H1 (cell line): ENCODE measurements at regions of chr3 and their contacts with region 1.

Region 1: DNA sequence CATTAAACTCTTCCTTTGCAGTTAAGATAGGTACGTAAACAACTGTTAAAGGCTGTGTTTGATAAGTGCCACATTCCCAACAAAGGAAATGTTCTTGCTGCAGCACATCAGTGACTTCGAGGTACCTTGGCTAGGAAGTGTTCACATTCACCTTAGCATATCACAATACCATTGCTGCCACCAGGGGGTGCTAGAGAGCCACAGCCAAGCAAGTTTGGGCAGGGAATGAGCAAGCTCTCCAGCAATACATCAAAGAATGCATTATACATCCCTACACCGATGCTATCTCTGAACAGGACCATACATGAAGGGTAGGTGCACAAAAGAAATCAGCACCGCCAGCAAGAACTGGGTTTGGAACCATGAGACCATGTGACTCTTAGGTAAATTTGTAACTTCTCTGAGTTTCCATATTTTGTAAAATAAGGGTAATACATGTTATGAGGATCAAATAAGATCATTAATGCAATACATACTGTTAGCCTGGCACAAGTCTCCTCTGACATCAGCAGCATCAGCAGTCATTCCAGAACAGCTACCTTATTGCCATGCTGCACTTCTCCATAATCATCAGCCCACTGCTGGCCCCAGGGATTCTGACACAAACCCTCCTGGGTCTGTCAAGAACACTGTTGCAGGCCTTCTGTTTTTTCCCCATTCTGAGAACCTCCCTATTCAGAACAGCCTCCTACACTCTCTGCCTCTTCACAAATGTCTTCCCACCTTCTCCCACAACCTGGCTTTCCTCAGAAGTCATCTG is 37.6 kb downstream of the RYK start:
- DNase-seq: peak; percentile 73 to 99
- H3K4me3 ChIP-seq: no peak overlapping the region
- H3K27ac ChIP-seq: no peak overlapping the region
- H3K4me1 ChIP-seq: no peaks in the 10 kb centered on the region
- H3K27me3 ChIP-seq: no peaks in the 10 kb centered on the region
- CTCF ChIP-seq: peak; percentile 82 to 99 (median 90)
- EP300 ChIP-seq: no peak
- POLR2A ChIP-seq: no peak
- RAD21 ChIP-seq: peak; percentile 82 to 89

Region 2: GRCh38 chr3:133871368-133872090 is 341.6 kb before region 1 on chr3:
- CTCF ChIA-PET with region 1: no interaction called
- POLR2A ChIA-PET with region 1: no interaction called
- DNase-seq: no peak
- H3K4me3 ChIP-seq: no peak overlapping the region
- H3K27ac ChIP-seq: no peak overlapping the region
- H3K4me1 ChIP-seq: peaks cover 0 to 3% (median 0%) of the 10 kb centered on the region in 4 experiments; a peak in 3 of 7 replicates
- H3K27me3 ChIP-seq: no peaks in the 10 kb centered on the region
- CTCF ChIP-seq: no peak
- EP300 ChIP-seq: no peak
- POLR2A ChIP-seq: no peak
- RAD21 ChIP-seq: no peak

Region 3: GRCh38 chr3:134145177-134145576 is 67.9 kb before region 1 on chr3:
- CTCF ChIA-PET with region 1: interaction called, 14 read pairs
- POLR2A ChIA-PET with region 1: no interaction called
- DNase-seq: no peak
- H3K4me3 ChIP-seq: no peak overlapping the region
- H3K27ac ChIP-seq: no peak overlapping the region
- H3K4me1 ChIP-seq: no peaks in the 10 kb centered on the region
- H3K27me3 ChIP-seq: no peaks in the 10 kb centered on the region
- CTCF ChIP-seq: peak; percentile 33 to 42 (median 41); a peak in 3 of 4 replicates
- EP300 ChIP-seq: no peak
- POLR2A ChIP-seq: no peak
- RAD21 ChIP-seq: peak in 1 of 2 experiments; percentile 40; a peak in 1 of 4 replicates

Region 4: DNA sequence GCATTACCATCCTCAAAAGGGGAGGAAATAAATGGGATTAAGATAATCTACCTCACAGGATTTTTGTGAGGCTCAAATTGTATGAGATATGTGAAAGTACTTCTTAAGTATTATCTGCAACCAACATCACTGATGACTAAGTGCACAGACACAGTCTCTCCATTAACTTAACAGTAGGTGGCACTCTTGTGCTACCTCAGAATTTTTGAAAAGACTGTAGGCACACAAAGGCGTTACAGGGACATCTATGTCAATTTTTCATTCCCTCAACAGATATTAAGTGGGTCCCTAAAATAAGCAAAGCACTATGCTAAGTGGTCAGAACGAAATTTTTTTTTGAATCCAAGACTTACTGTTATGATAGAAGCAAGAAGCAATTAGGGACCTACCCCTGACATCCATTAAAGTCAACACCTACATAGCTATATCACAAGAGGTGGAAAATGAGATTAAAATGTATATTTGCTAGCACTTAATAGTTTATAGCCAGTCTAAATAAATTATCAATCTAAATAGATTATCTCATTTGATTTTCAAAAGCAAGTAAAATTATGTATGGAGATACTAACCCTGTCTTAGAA is 15.3 kb before region 1 on chr3:
- CTCF ChIA-PET with region 1: interaction called, 140 read pairs
- POLR2A ChIA-PET with region 1: interaction called, 4 read pairs
- DNase-seq: no peak
- H3K4me3 ChIP-seq: no peak overlapping the region
- H3K27ac ChIP-seq: no peak overlapping the region
- H3K4me1 ChIP-seq: no peaks in the 10 kb centered on the region
- H3K27me3 ChIP-seq: no peaks in the 10 kb centered on the region
- CTCF ChIP-seq: peak in 2 of 3 experiments; percentile 60 to 67; a peak in 3 of 4 replicates
- EP300 ChIP-seq: no peak
- POLR2A ChIP-seq: no peak
- RAD21 ChIP-seq: peak; percentile 67 to 74

Region 5: GRCh38 chr3:134250717-134251220 is 37.7 kb after region 1 on chr3 and contains the start of gene RYK:
- CTCF ChIA-PET with region 1: interaction called, 10 read pairs
- POLR2A ChIA-PET with region 1: interaction called, 4 read pairs
- DNase-seq: peak; percentile 34 to 88
- H3K4me3 ChIP-seq: peak within 1 kb of the TSS; percentile 75 to 87 (median 81)
- H3K27ac ChIP-seq: peak within 1 kb of the TSS; percentile 69; the same call in 1 of the 2 replicates
- H3K4me1 ChIP-seq: peaks cover 5 to 20% (median 13%) of the 10 kb centered on the region in 4 experiments
- H3K27me3 ChIP-seq: no peaks in the 10 kb centered on the region
- CTCF ChIP-seq: no peak
- EP300 ChIP-seq: no peak
- POLR2A ChIP-seq: peak in 1 of 2 experiments; percentile 86; a peak in 2 of 3 replicates
- RAD21 ChIP-seq: no peak
- total RNA-seq, gene RYK: 63.8 and 66.9 TPM in 2 replicates

Region 6: DNA sequence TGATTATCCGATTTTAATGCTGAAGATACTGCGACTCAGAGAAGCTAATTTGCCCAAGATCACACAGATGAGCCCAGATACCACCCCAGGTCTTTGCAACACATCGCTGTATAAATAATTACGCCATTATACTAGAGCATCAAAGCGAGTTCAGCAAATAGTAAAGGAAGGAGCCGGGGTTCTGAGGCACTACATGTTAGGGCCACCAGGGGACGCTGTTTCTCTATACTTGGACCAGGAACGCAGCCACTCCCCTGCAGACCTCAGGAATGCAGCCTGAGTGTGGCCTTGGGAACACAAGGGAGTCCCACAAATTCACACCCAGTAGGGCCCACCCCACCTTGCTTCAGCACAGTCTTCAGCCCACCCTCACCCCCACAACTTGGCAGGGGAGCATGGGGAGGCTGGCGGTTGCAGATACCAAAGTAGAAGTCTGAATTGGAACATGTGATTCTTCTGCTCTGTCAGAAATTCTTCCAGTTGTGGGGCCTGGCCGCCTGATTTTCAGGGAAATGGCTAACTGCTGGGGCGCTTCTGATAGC is 95.3 kb after region 1 on chr3:
- CTCF ChIA-PET with region 1: interaction called, 84 read pairs
- POLR2A ChIA-PET with region 1: no interaction called
- DNase-seq: peak in 1 of 2 experiments; percentile 95
- H3K4me3 ChIP-seq: no peak overlapping the region
- H3K27ac ChIP-seq: peak overlapping the region; percentile 70; the same call in 1 of the 2 replicates
- H3K4me1 ChIP-seq: peaks cover 5 to 16% (median 8%) of the 10 kb centered on the region in 4 experiments
- H3K27me3 ChIP-seq: peaks cover 0 to 16% (median 9%) of the 10 kb centered on the region in 4 experiments; a peak in 5 of 7 replicates
- CTCF ChIP-seq: peak; percentile 86 to 99 (median 97)
- EP300 ChIP-seq: no peak
- POLR2A ChIP-seq: no peak
- RAD21 ChIP-seq: peak; percentile 99 to 100

Region 7: DNA sequence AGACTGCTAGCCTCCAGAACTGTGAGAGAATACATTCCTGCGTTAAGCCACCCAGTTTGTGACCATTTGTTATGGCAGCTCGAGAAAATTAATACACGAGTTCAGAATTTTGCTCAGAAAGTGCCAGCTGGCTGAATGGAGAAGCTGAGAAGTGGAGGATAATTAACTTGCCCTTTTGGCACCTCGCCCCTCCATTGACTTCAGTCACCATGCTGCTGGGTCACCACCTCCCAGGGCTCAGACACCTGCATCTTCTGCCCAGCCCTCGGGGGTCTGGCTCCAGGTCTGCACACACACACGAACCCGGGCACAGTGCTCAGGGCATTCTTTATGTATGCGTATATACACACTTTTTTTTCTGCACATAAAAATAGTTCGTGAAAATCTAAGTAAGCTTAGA is 129.2 kb after region 1 on chr3:
- CTCF ChIA-PET with region 1: no interaction called
- POLR2A ChIA-PET with region 1: no interaction called
- DNase-seq: no peak
- H3K4me3 ChIP-seq: no peak overlapping the region
- H3K27ac ChIP-seq: no peak overlapping the region
- H3K4me1 ChIP-seq: peaks cover 0 to 5% (median 0%) of the 10 kb centered on the region in 4 experiments; a peak in 3 of 7 replicates
- H3K27me3 ChIP-seq: no peaks in the 10 kb centered on the region; a peak in 1 of 7 replicates
- CTCF ChIP-seq: no peak
- EP300 ChIP-seq: no peak
- POLR2A ChIP-seq: no peak
- RAD21 ChIP-seq: no peak

Region 8: GRCh38 chr3:134838599-134838998 is 625.5 kb after region 1 on chr3:
- CTCF ChIA-PET with region 1: no interaction called
- POLR2A ChIA-PET with region 1: no interaction called
- DNase-seq: no peak
- H3K4me3 ChIP-seq: no peak overlapping the region
- H3K27ac ChIP-seq: no peak overlapping the region
- H3K4me1 ChIP-seq: no peaks in the 10 kb centered on the region
- H3K27me3 ChIP-seq: no peaks in the 10 kb centered on the region
- CTCF ChIP-seq: peak in 2 of 3 experiments; percentile 39 to 45; a peak in 2 of 4 replicates
- EP300 ChIP-seq: no peak
- POLR2A ChIP-seq: no peak
- RAD21 ChIP-seq: peak; percentile 49 to 64